Endothelial cell of umbilical vein (primary cell): ENCODE measurements at regions of chr1 and their contacts with region 1.

Region 1: DNA sequence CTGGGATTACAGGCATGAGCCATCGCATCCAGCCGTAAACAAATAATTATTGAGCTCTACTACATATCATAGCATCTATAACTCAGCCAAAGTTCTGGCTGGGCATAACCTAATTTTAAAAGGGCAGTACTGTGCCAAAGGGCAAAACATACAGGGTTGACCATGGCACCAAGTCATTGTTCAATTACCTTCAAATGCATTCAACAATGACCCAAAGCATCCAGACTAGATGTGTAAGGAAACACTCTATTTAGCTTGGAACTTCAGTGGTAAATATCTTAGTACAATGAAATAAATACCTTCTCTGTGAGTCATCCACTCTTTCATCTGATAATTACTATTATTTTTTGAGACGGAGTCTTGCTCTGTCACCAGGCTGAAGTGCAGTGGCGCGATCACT is 70.0 kb downstream of the NVL start:
- DNase-seq: peak; percentile 72
- H3K4me3 ChIP-seq: no peak overlapping the region
- H3K27ac ChIP-seq: peak overlapping the region; percentile 58
- H3K4me1 ChIP-seq: peaks cover 32% of the 10 kb centered on the region
- H3K27me3 ChIP-seq: no peaks in the 10 kb centered on the region
- CTCF ChIP-seq: no peak
- POLR2A ChIP-seq: peak; percentile 29

Region 2: DNA sequence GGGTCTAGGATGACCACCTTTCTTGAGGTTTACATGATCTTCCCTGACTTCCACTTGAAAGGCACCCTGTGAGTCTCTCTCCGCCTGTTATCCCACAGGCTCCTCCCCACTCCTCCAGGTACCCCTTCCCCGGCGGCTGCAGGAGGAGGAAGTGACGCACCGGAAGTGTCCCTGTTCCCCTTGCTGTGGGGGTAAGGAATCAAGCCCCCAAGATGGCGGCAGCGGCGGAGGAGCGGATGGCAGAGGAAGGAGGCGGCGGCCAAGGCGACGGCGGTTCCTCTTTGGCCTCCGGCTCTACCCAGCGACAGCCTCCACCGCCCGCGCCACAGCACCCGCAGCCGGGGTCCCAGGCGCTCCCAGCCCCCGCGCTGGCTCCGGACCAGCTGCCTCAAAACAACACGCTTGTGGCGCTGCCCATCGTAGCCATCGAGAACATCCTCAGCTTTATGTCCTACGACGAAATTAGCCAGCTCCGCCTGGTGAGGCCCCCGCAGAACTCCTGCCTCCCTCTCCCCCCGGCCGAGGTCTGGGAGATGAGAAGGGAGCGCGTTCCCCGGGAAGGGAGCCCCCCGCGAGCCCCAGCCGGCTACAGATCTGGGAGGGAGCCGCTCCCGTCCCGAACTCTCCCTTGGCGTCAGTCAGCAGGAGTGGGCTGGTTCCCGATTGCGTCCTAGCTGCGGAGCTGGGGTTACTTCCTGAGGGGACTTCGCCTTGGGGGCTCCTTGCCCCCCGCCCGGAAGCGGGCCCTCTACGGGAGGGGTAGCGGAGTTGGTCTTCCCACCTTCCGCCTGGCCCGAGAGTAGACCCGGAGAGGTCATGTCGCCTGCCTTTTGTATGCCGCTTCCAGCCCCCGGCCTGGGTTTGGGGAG is 145.8 kb before region 1 on chr1 and contains the start of gene FBXO28:
- CTCF ChIA-PET with region 1: no interaction called
- POLR2A ChIA-PET with region 1: no interaction called
- dilution Hi-C with region 1: no loop called
- intact Hi-C with region 1: no loop called
- DNase-seq: peak; percentile 92
- H3K4me3 ChIP-seq: peak within 1 kb of the TSS; percentile 62 to 99 (median 97)
- H3K27ac ChIP-seq: peak within 1 kb of the TSS; percentile 78
- H3K4me1 ChIP-seq: peaks cover 21% of the 10 kb centered on the region
- H3K27me3 ChIP-seq: no peaks in the 10 kb centered on the region
- CTCF ChIP-seq: no peak
- POLR2A ChIP-seq: peak; percentile 95
- total RNA-seq, gene FBXO28: 32.6 and 35.4 TPM in 2 replicates

Region 3: DNA sequence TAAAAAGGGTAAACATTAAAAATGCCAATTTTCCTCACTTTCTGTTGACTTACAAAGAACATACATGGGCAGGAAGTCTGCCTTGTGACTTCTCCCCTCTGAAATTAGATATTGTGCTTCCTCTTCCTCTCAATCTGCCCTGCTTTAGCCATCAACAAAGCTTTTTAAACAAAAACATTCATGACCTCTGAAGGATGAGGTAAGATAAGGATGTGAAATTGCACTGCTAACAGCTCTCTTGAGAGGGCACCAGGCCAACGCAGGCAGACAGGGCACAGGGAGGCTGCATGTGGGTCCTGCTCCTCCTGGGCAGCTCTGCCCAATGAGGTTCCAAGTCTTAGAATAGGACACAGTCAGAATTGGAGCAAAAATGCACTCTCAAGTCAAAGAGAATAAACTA is 14.7 kb before region 1 on chr1:
- CTCF ChIA-PET with region 1: interaction called, 6 read pairs
- POLR2A ChIA-PET with region 1: no interaction called
- dilution Hi-C with region 1: no loop called
- intact Hi-C with region 1: loop called (anchors 1 kb)
- DNase-seq: peak; percentile 99
- H3K4me3 ChIP-seq: no peak overlapping the region
- H3K27ac ChIP-seq: peak overlapping the region; percentile 57
- H3K4me1 ChIP-seq: peaks cover 15% of the 10 kb centered on the region
- H3K27me3 ChIP-seq: no peaks in the 10 kb centered on the region
- CTCF ChIP-seq: no peak
- POLR2A ChIP-seq: peak; percentile 81